ENCODE measurements at regions of chr5 and their contacts with region 1.

Region 1: DNA sequence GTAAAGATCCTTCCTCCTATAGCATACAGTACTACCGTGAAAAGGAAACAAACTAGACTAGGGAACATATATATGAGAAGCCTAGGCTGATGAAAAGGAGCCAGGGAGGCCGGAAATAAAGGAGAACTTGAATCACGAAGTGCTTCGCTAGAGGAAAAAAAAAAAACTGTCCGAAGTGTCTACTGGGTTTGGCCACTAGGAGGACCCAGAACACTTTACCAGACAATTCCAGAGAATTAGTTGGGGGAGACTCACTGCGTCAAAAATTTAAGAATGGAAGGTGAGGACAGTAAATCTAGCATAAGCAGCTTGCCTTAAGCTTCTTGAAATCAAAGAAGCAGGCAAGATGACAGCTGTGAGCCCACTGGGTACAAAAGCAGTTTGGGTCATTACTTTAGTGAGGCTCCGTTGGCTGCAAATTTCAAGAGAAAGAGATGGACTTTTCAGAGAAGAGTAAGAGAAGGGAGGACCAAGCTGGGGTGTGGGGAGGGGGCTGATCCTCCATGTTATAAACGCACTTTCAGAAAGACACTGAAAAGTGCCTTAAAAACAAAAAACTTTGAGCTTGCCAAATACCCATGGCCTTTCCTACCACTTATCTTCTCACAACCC is 47.4 kb downstream of the P4HA2 start:
- DNase-seq: no peak
- H3K4me3 Mint-ChIP-seq: no peak overlapping the region
- H3K27ac Mint-ChIP-seq: peak overlapping the region; percentile 25
- H3K4me1 Mint-ChIP-seq: peaks cover 45% of the 10 kb centered on the region
- H3K27me3 Mint-ChIP-seq: no peaks in the 10 kb centered on the region

Region 2: GRCh38 chr5:132114150-132115121 is 65.8 kb before region 1 on chr5:
- intact Hi-C with region 1: loop called (anchors 2 kb)
- DNase-seq: no peak
- H3K4me3 Mint-ChIP-seq: no peak overlapping the region
- H3K27ac Mint-ChIP-seq: peak overlapping the region; percentile 88
- H3K4me1 Mint-ChIP-seq: peaks cover 69% of the 10 kb centered on the region
- H3K27me3 Mint-ChIP-seq: no peaks in the 10 kb centered on the region

Region 3: GRCh38 chr5:132203464-132203818 is 23.2 kb after region 1 on chr5:
- intact Hi-C with region 1: no loop called
- DNase-seq: no peak
- H3K4me3 Mint-ChIP-seq: no peak overlapping the region
- H3K27ac Mint-ChIP-seq: no peak overlapping the region
- H3K4me1 Mint-ChIP-seq: peaks cover 12% of the 10 kb centered on the region
- H3K27me3 Mint-ChIP-seq: no peaks in the 10 kb centered on the region

Region 4: GRCh38 chr5:132227485-132228240 is 47.4 kb after region 1 on chr5 and contains the start of gene P4HA2:
- intact Hi-C with region 1: loop called (anchors 5 kb)
- DNase-seq: peak; percentile 52
- H3K4me3 Mint-ChIP-seq: peak within 1 kb of the TSS; percentile 82
- H3K27ac Mint-ChIP-seq: no peak within 1 kb of the TSS
- H3K4me1 Mint-ChIP-seq: peaks cover 55% of the 10 kb centered on the region
- H3K27me3 Mint-ChIP-seq: peaks cover 14% of the 10 kb centered on the region
- total RNA-seq, gene P4HA2: 48.7 and 49.4 TPM in 2 replicates

Region 5: GRCh38 chr5:132293066-132293991 is 113.1 kb after region 1 on chr5:
- intact Hi-C with region 1: loop called (anchors 1 kb)
- DNase-seq: peak; percentile 53
- H3K4me3 Mint-ChIP-seq: peak overlapping the region; percentile 93
- H3K27ac Mint-ChIP-seq: peak overlapping the region; percentile 75
- H3K4me1 Mint-ChIP-seq: peaks cover 30% of the 10 kb centered on the region
- H3K27me3 Mint-ChIP-seq: peaks cover 15% of the 10 kb centered on the region

Region 6: GRCh38 chr5:132369474-132370180 is 189.4 kb after region 1 on chr5 and contains the start of gene SLC22A5:
- intact Hi-C with region 1: loop called (anchors 5 kb)
- DNase-seq: peak; percentile 66
- H3K4me3 Mint-ChIP-seq: peak within 1 kb of the TSS; percentile 81
- H3K27ac Mint-ChIP-seq: peak within 1 kb of the TSS; percentile 70
- H3K4me1 Mint-ChIP-seq: peaks cover 33% of the 10 kb centered on the region
- H3K27me3 Mint-ChIP-seq: no peaks in the 10 kb centered on the region
- total RNA-seq, gene SLC22A5: 4.3 and 6.2 TPM in 2 replicates

Region 7: GRCh38 chr5:132386644-132387286 is 206.5 kb after region 1 on chr5:
- intact Hi-C with region 1: loop called (anchors 5 kb)
- DNase-seq: peak; percentile 72
- H3K4me3 Mint-ChIP-seq: no peak overlapping the region
- H3K27ac Mint-ChIP-seq: peak overlapping the region; percentile 54
- H3K4me1 Mint-ChIP-seq: peaks cover 61% of the 10 kb centered on the region
- H3K27me3 Mint-ChIP-seq: peaks cover 3% of the 10 kb centered on the region

Measured in activated T-helper 1 cell treated with anti-CD3 and anti-CD28 coated beads, Interleukin-12 subunit alpha, Interleukin-12 subunit beta, Interleukin-2, Interleukin-4 antibody, amounts not matched to agents 30 ng/mL and 10 ng/mL and 1 ng/mL, durations not matched to agents 14 hours and 24 hours and 36 hours (primary cell).